HepG2 (cell line): ENCODE measurements at regions of chrX and their contacts with region 1.

Region 1: GRCh38 chrX:135625995-135626394 is 87.4 kb upstream of the CT45A1 start:
- DNase-seq: peak; percentile 1
- ATAC-seq: no peak
- H3K4me3 ChIP-seq: no peak overlapping the region
- H3K27ac ChIP-seq: no peak overlapping the region
- H3K4me1 ChIP-seq: no peaks in the 10 kb centered on the region
- H3K27me3 ChIP-seq: no peaks in the 10 kb centered on the region
- CTCF ChIP-seq: no peak
- EP300 ChIP-seq: no peak
- POLR2A ChIP-seq: no peak
- RAD21 ChIP-seq: no peak

Region 2: GRCh38 chrX:134774190-134775048 is 851.6 kb before region 1 on chrX:
- CTCF ChIA-PET with region 1: no interaction called
- POLR2A ChIA-PET with region 1: no interaction called
- in situ Hi-C with region 1: no loop called
- intact Hi-C with region 1: no loop called
- DNase-seq: no peak
- ATAC-seq: no peak
- H3K4me3 ChIP-seq: no peak overlapping the region
- H3K27ac ChIP-seq: no peak overlapping the region
- H3K4me1 ChIP-seq: no peaks in the 10 kb centered on the region
- H3K27me3 ChIP-seq: no peaks in the 10 kb centered on the region
- CTCF ChIP-seq: no peak
- EP300 ChIP-seq: no peak
- POLR2A ChIP-seq: no peak
- RAD21 ChIP-seq: no peak

Region 3: GRCh38 chrX:135931644-135932487 is 305.9 kb after region 1 on chrX:
- CTCF ChIA-PET with region 1: no interaction called
- POLR2A ChIA-PET with region 1: no interaction called
- in situ Hi-C with region 1: no loop called
- intact Hi-C with region 1: loop called (anchors 5 kb)
- DNase-seq: peak; percentile 15
- ATAC-seq: peak; percentile 89
- H3K4me3 ChIP-seq: no peak overlapping the region
- H3K27ac ChIP-seq: no peak overlapping the region
- H3K4me1 ChIP-seq: no peaks in the 10 kb centered on the region
- H3K27me3 ChIP-seq: no peaks in the 10 kb centered on the region; a peak in 1 of 5 replicates
- CTCF ChIP-seq: peak; percentile 70
- EP300 ChIP-seq: no peak
- POLR2A ChIP-seq: no peak
- RAD21 ChIP-seq: no peak